CD8-positive, alpha-beta T cell (primary cell): ENCODE measurements at regions of chr4 and their contacts with region 1.

Region 1: DNA sequence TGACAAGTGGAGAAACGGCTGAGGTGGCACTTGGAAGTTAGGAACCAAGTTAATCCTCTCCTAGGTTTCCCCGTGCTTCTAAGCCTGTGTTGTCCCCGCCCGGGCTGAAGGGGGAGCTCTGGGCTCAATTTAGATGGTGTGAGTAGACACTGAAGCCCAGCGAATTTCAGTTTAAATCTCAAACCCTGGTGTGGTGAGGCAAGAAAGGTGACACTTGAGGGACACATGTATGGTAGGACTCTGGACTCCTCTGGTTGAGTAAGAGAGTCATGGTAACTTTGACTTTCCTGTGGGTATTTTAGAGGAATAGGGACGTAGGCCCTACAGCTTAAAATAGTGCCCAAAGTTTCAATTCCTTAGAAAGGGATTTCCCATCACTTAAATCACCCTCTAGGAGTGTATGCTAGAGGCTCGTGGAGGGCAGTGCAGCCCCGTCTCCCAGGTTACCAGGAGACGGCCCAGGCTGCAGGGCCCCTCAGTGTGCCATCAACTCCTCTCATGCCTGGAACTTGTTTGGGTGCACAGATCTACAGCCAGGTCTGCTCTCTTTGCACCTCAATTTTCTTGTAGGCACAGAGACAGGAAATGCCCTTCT is 24.0 kb downstream of the HAND2 start:
- DNase-seq: peak in 4 of 9 experiments; percentile 33 to 52 (median 38)
- ATAC-seq: no peak
- H3K4me3 ChIP-seq: no peak overlapping the region
- H3K4me3 Mint-ChIP-seq: peak overlapping the region; percentile 51
- H3K27ac ChIP-seq: no peak overlapping the region
- H3K27ac Mint-ChIP-seq: no peak overlapping the region
- H3K4me1 ChIP-seq: peaks cover 33% of the 10 kb centered on the region
- H3K4me1 Mint-ChIP-seq: peaks cover 35% of the 10 kb centered on the region
- H3K27me3 ChIP-seq: peaks cover 39 to 65% of the 10 kb centered on the region in 2 experiments
- H3K27me3 Mint-ChIP-seq: peaks cover 78% of the 10 kb centered on the region
- CTCF ChIP-seq: peak; percentile 44

Region 2: DNA sequence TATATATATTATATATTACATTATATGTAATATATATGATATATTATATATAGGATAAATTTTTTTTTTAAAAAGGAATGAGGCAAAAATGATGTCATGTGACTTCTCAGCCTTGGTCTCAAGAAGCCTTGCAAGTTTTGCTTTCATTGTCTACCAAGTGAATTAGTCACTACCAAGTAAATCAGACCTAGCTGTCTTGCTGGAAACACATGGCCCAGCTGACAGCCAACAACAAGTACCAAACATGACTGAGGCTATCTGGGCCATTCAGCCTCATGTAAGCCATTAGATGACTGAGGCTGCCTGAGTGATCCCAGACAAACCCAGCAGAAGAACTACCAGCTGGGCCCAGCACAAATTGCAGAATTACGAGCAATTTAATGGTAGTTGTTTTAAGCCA is 20.9 kb before region 1 on chr4:
- CTCF ChIA-PET with region 1: no interaction called
- POLR2A ChIA-PET with region 1: no interaction called
- intact Hi-C with region 1: loop called in 1 of 2 experiments (anchors 2 kb)
- DNase-seq: no peak
- ATAC-seq: no peak
- H3K4me3 ChIP-seq: no peak overlapping the region
- H3K4me3 Mint-ChIP-seq: no peak overlapping the region
- H3K27ac ChIP-seq: no peak overlapping the region
- H3K27ac Mint-ChIP-seq: no peak overlapping the region
- H3K4me1 ChIP-seq: no peaks in the 10 kb centered on the region
- H3K4me1 Mint-ChIP-seq: no peaks in the 10 kb centered on the region
- H3K27me3 ChIP-seq: no peaks in the 10 kb centered on the region
- H3K27me3 Mint-ChIP-seq: no peaks in the 10 kb centered on the region
- CTCF ChIP-seq: no peak

Region 3: GRCh38 chr4:174120446-174121295 is 614.6 kb after region 1 on chr4:
- CTCF ChIA-PET with region 1: interaction called, 3 read pairs
- POLR2A ChIA-PET with region 1: no interaction called
- intact Hi-C with region 1: loop called (anchors 2 to 10 kb)
- DNase-seq: peak in 2 of 9 experiments; percentile 15 to 30
- ATAC-seq: no peak
- H3K4me3 ChIP-seq: no peak overlapping the region
- H3K4me3 Mint-ChIP-seq: no peak overlapping the region
- H3K27ac ChIP-seq: no peak overlapping the region
- H3K27ac Mint-ChIP-seq: no peak overlapping the region
- H3K4me1 ChIP-seq: no peaks in the 10 kb centered on the region
- H3K4me1 Mint-ChIP-seq: peaks cover 4% of the 10 kb centered on the region
- H3K27me3 ChIP-seq: no peaks in the 10 kb centered on the region
- H3K27me3 Mint-ChIP-seq: peaks cover 39% of the 10 kb centered on the region
- CTCF ChIP-seq: peak; percentile 18

Region 4: GRCh38 chr4:174156239-174156826 is 650.3 kb after region 1 on chr4:
- CTCF ChIA-PET with region 1: no interaction called
- POLR2A ChIA-PET with region 1: no interaction called
- intact Hi-C with region 1: loop called (anchors 2 to 10 kb)
- DNase-seq: peak in 2 of 9 experiments; percentile 25 to 29
- ATAC-seq: no peak
- H3K4me3 ChIP-seq: no peak overlapping the region
- H3K4me3 Mint-ChIP-seq: no peak overlapping the region
- H3K27ac ChIP-seq: no peak overlapping the region
- H3K27ac Mint-ChIP-seq: no peak overlapping the region
- H3K4me1 ChIP-seq: no peaks in the 10 kb centered on the region
- H3K4me1 Mint-ChIP-seq: no peaks in the 10 kb centered on the region
- H3K27me3 ChIP-seq: peaks cover 0 to 3% of the 10 kb centered on the region in 2 experiments
- H3K27me3 Mint-ChIP-seq: peaks cover 18% of the 10 kb centered on the region
- CTCF ChIP-seq: peak; percentile 57

Region 5: DNA sequence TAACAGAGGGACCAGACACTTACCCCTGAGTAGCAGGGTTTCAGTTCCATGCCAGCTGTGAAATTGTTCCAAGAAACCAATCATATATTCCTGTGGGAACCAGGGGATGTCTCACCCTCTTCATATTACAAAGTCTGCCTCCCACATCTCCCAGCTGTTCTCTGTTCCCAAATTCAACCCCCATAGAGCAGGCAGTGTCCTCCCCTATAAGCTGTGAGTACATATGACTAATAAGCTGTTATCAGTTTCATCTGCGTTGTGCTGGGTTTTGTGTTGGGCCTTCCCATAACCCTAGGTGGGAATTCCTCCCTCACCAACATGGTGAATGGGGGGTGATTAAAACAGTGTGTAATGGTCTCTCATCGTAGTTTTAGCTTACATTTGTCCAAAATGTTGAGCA is 818.7 kb after region 1 on chr4:
- CTCF ChIA-PET with region 1: no interaction called
- POLR2A ChIA-PET with region 1: no interaction called
- intact Hi-C with region 1: loop called in 1 of 2 experiments (anchors 10 kb)
- DNase-seq: no peak
- ATAC-seq: no peak
- H3K4me3 ChIP-seq: no peak overlapping the region
- H3K4me3 Mint-ChIP-seq: no peak overlapping the region
- H3K27ac ChIP-seq: no peak overlapping the region
- H3K27ac Mint-ChIP-seq: no peak overlapping the region
- H3K4me1 ChIP-seq: no peaks in the 10 kb centered on the region
- H3K4me1 Mint-ChIP-seq: no peaks in the 10 kb centered on the region
- H3K27me3 ChIP-seq: no peaks in the 10 kb centered on the region
- H3K27me3 Mint-ChIP-seq: no peaks in the 10 kb centered on the region
- CTCF ChIP-seq: no peak